ENCODE measurements at regions of chr19 and their contacts with region 1.

Region 1: GRCh38 chr19:42652021-42652420 is 57.3 kb upstream of the CEACAM8 start:
- DNase-seq: no peak
- H3K4me3 ChIP-seq: no peak overlapping the region
- H3K27me3 ChIP-seq: peaks cover 11% of the 10 kb centered on the region
- CTCF ChIP-seq: no peak

Region 2: GRCh38 chr19:42584466-42584865 is 67.6 kb before region 1 on chr19:
- CTCF ChIA-PET with region 1: no interaction called
- POLR2A ChIA-PET with region 1: no interaction called
- DNase-seq: no peak
- H3K4me3 ChIP-seq: no peak overlapping the region
- H3K27me3 ChIP-seq: peaks cover 8% of the 10 kb centered on the region; the same call in 1 of the 2 replicates
- CTCF ChIP-seq: no peak

Region 3: GRCh38 chr19:42596391-42597072 is 55.5 kb before region 1 on chr19:
- CTCF ChIA-PET with region 1: no interaction called
- POLR2A ChIA-PET with region 1: no interaction called
- DNase-seq: no peak
- H3K4me3 ChIP-seq: no peak overlapping the region
- H3K27me3 ChIP-seq: peaks cover 10% of the 10 kb centered on the region
- CTCF ChIP-seq: peak; percentile 95

Region 4: GRCh38 chr19:42634409-42635232 is 17.4 kb before region 1 on chr19:
- CTCF ChIA-PET with region 1: interaction called, 24 read pairs
- POLR2A ChIA-PET with region 1: no interaction called
- DNase-seq: no peak
- H3K4me3 ChIP-seq: no peak overlapping the region
- H3K27me3 ChIP-seq: peaks cover 7% of the 10 kb centered on the region; the same call in 1 of the 2 replicates
- CTCF ChIP-seq: peak; percentile 87